Right lobe of liver (tissue), 6 donors: ENCODE measurements at regions of chr10 and their contacts with region 1.

Region 1: GRCh38 chr10:44857363-44858016 is 53.6 kb upstream of the TMEM72 start:
- DNase-seq: peak in 2 of 3 donors; percentile 53 to 70
- ATAC-seq: peak; percentile 80 to 91 (median 84)
- H3K4me3 ChIP-seq: no peak overlapping the region
- H3K27ac ChIP-seq: no peak overlapping the region
- H3K4me1 ChIP-seq: peaks cover 0 to 6% (median 0%) of the 10 kb centered on the region in 4 donors
- H3K27me3 ChIP-seq: no peaks in the 10 kb centered on the region
- CTCF ChIP-seq: peak; percentile 89 to 98 (median 98)
- POLR2A ChIP-seq: no peak

Region 2: GRCh38 chr10:43671656-43672531 is 1185.6 kb before region 1 on chr10:
- intact Hi-C with region 1: loop called (anchors 5 to 10 kb)
- DNase-seq: peak in 2 of 3 donors; percentile 45 to 69
- ATAC-seq: peak; percentile 88 to 97 (median 94)
- H3K4me3 ChIP-seq: no peak overlapping the region
- H3K27ac ChIP-seq: no peak overlapping the region
- H3K4me1 ChIP-seq: no peaks in the 10 kb centered on the region
- H3K27me3 ChIP-seq: no peaks in the 10 kb centered on the region
- CTCF ChIP-seq: peak; percentile 72 to 91 (median 78)
- POLR2A ChIP-seq: no peak

Region 3: DNA sequence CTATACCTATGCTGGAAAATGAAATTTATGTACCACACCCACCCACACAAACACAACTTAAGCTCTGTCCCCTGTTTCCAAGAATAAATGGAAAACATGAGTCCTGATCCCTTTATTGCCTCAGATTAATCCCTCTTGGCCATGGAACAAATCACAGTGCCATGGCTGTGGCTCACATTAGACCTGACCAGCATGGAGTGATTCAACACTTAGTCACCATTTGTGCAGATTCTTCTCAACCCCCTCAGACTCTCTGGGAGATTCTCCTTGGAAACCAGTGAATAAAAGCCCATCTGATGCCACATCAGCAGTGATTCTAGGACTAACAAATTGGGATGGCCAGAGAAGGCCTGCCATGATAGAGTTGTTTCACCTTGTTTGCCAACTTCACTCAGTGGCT is 150.7 kb before region 1 on chr10:
- intact Hi-C with region 1: loop called in 1 of 2 experiments (anchors 5 kb)
- DNase-seq: no peak
- ATAC-seq: no peak
- H3K4me3 ChIP-seq: no peak overlapping the region
- H3K27ac ChIP-seq: no peak overlapping the region
- H3K4me1 ChIP-seq: no peaks in the 10 kb centered on the region
- H3K27me3 ChIP-seq: no peaks in the 10 kb centered on the region
- CTCF ChIP-seq: no peak
- POLR2A ChIP-seq: no peak